ENCODE measurements at regions of chr10 and their contacts with region 1.

Region 1: DNA sequence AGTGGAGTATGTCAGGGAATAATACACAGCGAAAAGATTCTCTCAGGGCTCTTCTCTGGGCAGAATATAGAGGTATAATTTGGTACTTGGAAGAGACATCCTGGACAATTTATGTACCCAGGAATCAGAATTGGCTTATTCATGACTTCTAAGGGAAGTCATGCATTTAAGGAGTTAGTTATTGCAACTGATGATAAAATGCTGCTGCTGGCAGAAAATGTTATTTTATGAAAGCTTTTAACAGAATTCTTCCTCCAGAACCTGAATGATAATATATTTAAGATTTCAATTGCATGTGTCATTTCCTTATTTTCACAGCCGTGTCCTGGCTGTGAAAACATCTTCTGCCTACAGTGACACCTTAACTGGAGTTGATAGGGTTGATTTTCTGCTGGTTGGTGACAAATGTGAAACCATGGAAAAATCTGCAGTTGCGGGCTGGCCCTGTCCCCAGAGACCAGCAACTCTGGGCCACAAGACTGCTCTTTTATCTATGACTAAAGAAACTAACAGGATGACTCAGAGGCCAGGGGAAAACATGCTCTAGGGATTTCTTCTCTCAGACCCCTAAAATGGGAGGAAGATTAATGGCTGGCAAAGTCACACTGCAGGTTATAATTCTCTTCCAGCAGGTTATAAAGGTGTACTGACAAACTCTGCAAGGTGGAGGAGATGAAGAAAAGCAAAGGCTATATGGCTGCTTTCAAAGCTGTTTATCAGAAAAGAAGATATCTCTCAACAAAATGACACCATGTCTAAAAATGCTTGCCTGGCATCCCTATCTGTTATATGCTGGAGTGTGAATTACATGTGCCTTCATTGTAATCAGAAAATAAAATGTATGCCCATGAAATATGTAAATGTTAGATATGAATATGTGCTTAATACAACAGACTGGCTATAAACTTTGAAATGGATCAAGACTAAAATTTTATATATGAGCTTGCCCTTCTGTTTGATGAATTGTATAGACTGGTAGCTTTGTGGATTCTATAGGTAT is 12.1 kb upstream of the TRUB1 start:
- DNase-seq: peak; percentile 8
- H3K4me3 Mint-ChIP-seq: no peak overlapping the region
- H3K27ac Mint-ChIP-seq: peak overlapping the region; percentile 53
- H3K4me1 Mint-ChIP-seq: peaks cover 17% of the 10 kb centered on the region
- H3K27me3 Mint-ChIP-seq: peaks cover 5% of the 10 kb centered on the region

Region 2: DNA sequence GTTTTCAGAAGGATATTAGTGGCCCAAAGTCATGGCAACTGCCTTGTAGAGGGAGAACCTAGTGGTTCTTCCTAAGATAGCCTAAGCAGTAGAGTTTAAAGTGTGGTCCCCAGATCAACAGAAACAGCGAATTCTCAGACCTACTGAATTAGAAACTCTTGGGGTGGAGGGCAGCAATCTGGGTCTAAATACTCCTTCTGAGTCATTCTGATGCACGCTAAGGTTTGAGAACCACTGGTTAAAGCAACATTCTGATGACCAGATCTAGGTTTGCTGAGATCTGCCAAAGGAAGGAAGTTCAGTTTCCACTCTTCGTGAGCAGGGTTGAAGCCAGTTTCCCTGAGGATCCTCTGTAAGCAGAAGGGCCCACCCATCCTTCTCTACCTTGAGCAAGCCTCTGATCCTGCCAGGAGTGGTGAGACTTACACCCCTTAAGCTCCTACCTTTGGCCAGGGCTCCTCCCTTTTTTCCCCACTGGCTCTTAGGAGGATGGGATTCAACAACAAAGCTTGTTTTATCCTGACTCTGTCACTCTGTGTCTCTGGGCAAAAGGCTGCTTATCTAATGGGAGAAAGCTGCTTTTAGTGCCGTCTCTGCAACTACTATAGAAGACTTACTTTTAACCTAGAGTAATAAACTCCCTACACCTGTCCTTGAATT is 14.7 kb before region 1 on chr10:
- intact Hi-C with region 1: loop called (anchors 1 kb)
- DNase-seq: no peak
- H3K4me3 Mint-ChIP-seq: no peak overlapping the region
- H3K27ac Mint-ChIP-seq: peak overlapping the region; percentile 2
- H3K4me1 Mint-ChIP-seq: peaks cover 29% of the 10 kb centered on the region
- H3K27me3 Mint-ChIP-seq: no peaks in the 10 kb centered on the region

Measured in activated T-helper 1 cell treated with anti-CD3 and anti-CD28 coated beads, Interleukin-12 subunit alpha, Interleukin-12 subunit beta, Interleukin-2, Interleukin-4 antibody, amounts not matched to agents 30 ng/mL and 10 ng/mL and 1 ng/mL, durations not matched to agents 14 hours and 24 hours and 36 hours (primary cell).